GM18951 (cell line): ENCODE measurements at regions of chr2 and their contacts with region 1.

Region 1: DNA sequence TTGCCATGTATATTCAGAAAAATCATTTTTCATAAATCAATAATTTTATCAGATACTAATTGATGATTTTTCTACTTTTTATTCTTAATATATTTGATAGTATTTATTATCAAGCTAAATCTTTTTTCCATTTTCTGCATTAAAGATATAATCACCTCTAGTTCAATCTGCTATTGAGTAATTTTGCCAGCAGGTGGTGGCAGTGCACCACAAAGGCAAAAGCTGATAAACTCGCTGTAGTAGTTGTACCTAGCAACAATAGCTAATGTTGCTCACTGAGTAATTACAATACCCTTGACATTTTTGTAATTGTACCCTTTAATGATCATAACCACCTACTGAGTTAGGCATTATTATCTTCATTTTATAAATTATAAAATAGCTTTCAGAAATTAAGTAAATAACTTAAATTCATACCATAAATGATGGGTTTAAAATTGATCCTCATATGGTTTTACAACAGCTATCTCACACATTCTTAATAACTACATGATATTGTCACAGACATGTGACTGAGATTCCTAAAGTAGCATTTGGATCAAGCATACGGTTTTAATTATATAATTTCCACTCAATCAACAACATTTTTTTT is 52.0 kb upstream of the CALCRL start:
- POLR2A ChIP-seq: no peak

Region 2: GRCh38 chr2:187842978-187843847 is 343.2 kb after region 1 on chr2:
- in situ Hi-C with region 1: loop called (anchors 25 kb)
- POLR2A ChIP-seq: no peak